CD14-positive monocyte (primary cell): ENCODE measurements at regions of chr12 and their contacts with region 1.

Region 1: GRCh38 chr12:104641862-104642261 is 185.1 kb downstream of the CHST11 start:
- DNase-seq: peak; percentile 91 to 94 (median 93)
- H3K4me3 ChIP-seq: no peak overlapping the region
- H3K4me3 Mint-ChIP-seq: no peak overlapping the region
- H3K27ac ChIP-seq: peak overlapping the region; percentile 93 to 98
- H3K27ac Mint-ChIP-seq: peak overlapping the region; percentile 97 to 100 (median 99)
- H3K4me1 ChIP-seq: peaks cover 88 to 99% of the 10 kb centered on the region in 2 donors
- H3K4me1 Mint-ChIP-seq: peaks cover 86% of the 10 kb centered on the region
- H3K27me3 ChIP-seq: no peaks in the 10 kb centered on the region
- H3K27me3 Mint-ChIP-seq: no peaks in the 10 kb centered on the region
- CTCF ChIP-seq: peak; percentile 51

Region 2: GRCh38 chr12:104604070-104604994 is 37.5 kb before region 1 on chr12:
- intact Hi-C with region 1: loop called (anchors 2 to 5 kb)
- DNase-seq: peak; percentile 94 to 97 (median 95)
- H3K4me3 ChIP-seq: peak overlapping the region in 1 of 3 experiments; percentile 39
- H3K4me3 Mint-ChIP-seq: peak overlapping the region; percentile 65 to 71
- H3K27ac ChIP-seq: peak overlapping the region; percentile 71 to 92
- H3K27ac Mint-ChIP-seq: peak overlapping the region; percentile 95 to 99 (median 98)
- H3K4me1 ChIP-seq: peaks cover 61 to 74% of the 10 kb centered on the region in 2 donors
- H3K4me1 Mint-ChIP-seq: peaks cover 86% of the 10 kb centered on the region
- H3K27me3 ChIP-seq: no peaks in the 10 kb centered on the region
- H3K27me3 Mint-ChIP-seq: peaks cover 0 to 4% (median 0%) of the 10 kb centered on the region in 3 donors
- CTCF ChIP-seq: no peak

Region 3: DNA sequence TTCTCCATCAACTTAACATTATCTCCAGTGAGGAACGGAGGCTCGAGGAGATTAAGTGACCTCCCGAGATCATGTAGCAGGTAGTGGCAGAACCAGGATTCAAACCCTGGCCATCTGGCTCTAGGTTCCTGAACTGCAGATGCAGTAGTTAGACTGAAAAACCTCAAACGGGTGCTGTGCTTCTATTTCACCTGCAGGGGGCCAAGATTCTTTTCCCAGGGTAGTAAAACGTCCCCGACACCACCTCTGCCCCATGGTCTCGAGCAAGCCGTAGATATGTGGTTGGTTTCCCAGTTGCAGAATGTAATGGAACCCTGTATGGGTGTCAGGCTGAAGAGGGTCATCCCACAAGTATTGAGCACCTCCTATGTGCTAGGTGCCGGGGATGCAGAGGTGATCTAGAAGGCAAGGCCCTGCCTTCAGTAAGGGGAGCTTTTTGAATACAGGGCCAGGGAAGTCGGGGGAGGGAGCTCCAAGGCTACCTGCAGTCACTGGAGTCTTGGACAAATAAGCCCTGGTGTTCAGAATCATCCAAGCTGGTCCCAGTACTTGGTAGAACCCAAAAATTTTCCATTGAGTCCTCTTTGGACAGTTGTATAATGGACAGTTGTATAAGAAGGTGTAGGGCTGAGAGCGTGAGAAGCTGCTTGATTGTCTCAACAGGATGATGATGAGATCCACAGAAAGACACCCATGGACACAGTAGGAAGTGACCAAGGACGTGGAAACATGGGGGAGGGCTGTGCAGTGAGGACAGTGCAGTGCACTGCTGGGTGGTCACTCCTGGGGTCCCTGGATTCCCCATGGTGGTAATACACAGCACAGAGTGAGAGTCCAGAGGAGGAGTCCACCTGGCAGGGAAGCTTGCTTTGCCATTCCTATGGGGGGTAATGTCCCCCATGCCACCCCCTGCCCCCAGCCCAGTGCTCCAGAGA is 12.1 kb after region 1 on chr12:
- intact Hi-C with region 1: loop called in 1 of 2 experiments (anchors 1 kb)
- DNase-seq: peak in 1 of 3 donors; percentile 19
- H3K4me3 ChIP-seq: no peak overlapping the region
- H3K4me3 Mint-ChIP-seq: no peak overlapping the region
- H3K27ac ChIP-seq: peak overlapping the region in 1 of 2 donors; percentile 97
- H3K27ac Mint-ChIP-seq: peak overlapping the region; percentile 69 to 99 (median 88)
- H3K4me1 ChIP-seq: peaks cover 65 to 72% of the 10 kb centered on the region in 2 donors
- H3K4me1 Mint-ChIP-seq: peaks cover 85% of the 10 kb centered on the region
- H3K27me3 ChIP-seq: no peaks in the 10 kb centered on the region
- H3K27me3 Mint-ChIP-seq: no peaks in the 10 kb centered on the region
- CTCF ChIP-seq: peak; percentile 44

Region 4: DNA sequence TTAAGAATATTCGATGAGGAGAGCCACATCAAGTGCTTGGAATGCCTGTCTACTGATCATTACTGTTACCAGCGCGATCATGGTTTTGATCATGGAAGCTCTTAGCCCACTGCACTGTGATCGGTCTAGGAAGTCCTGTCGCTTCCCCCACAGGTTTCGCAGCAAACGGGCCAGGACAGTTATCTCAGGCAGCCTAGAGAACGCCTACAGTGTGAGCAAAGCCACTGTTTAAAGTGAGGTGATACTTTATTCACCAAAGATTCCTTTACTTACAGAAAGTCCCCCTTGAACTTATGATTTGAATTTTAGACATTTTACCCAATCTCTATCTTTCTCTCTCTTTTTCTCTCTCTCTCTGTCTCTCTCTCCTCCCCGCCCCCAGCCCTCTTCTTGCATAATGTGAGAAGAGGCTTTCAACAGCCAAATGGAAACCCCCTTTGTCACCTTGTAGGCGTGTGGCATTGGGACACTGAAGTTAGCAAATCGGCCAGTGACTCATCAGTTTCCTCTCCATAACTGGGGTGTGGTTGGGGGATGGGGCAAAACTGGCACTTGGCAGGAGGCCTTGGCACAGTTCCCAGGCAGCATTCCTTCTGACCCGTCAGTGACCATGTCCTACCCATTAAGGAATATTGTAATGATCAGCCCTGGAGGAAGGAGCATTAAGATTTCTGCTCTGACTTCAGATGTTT is 29.7 kb after region 1 on chr12:
- intact Hi-C with region 1: loop called in 1 of 2 experiments (anchors 2 kb)
- DNase-seq: peak; percentile 96 to 99 (median 99)
- H3K4me3 ChIP-seq: peak overlapping the region in 1 of 3 experiments; percentile 36
- H3K4me3 Mint-ChIP-seq: peak overlapping the region; percentile 65 to 84
- H3K27ac ChIP-seq: peak overlapping the region; percentile 97
- H3K27ac Mint-ChIP-seq: peak overlapping the region; percentile 98 to 100 (median 99)
- H3K4me1 ChIP-seq: peaks cover 86 to 94% of the 10 kb centered on the region in 2 donors
- H3K4me1 Mint-ChIP-seq: peaks cover 84% of the 10 kb centered on the region
- H3K27me3 ChIP-seq: no peaks in the 10 kb centered on the region
- H3K27me3 Mint-ChIP-seq: peaks cover 0 to 1% (median 0%) of the 10 kb centered on the region in 3 donors
- CTCF ChIP-seq: no peak

Region 5: DNA sequence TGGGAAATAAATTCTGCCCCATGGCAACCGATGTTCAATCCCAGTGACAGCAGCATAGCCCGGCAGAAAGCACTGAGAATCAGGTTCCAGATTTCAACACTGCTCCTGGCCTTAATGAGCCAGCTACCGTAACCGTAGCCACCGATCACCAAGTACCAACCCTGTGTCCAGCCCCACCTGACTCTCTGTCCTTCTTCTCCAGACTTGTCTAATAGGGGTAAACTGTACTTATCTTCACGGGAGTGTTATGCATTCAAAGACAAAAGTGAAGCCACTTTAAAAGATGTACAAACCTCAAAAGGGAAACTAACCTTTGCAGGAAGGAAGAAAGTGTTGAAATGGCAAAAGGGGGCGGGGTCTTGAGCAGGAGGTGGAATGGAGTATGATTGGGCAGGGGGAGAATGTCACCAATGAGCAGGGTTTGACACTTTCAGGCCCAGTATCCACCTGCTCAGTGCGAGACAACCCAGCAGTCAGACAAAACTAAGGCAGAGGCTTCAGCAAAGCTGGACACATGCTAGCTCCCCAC is 41.0 kb after region 1 on chr12:
- intact Hi-C with region 1: no loop called
- DNase-seq: peak; percentile 69 to 79 (median 78)
- H3K4me3 ChIP-seq: peak overlapping the region; percentile 19 to 70 (median 67)
- H3K4me3 Mint-ChIP-seq: peak overlapping the region; percentile 60 to 90
- H3K27ac ChIP-seq: peak overlapping the region; percentile 78 to 94
- H3K27ac Mint-ChIP-seq: peak overlapping the region; percentile 91 to 98 (median 96)
- H3K4me1 ChIP-seq: peaks cover 89 to 99% of the 10 kb centered on the region in 2 donors
- H3K4me1 Mint-ChIP-seq: peaks cover 91% of the 10 kb centered on the region
- H3K27me3 ChIP-seq: no peaks in the 10 kb centered on the region
- H3K27me3 Mint-ChIP-seq: peaks cover 0 to 6% (median 0%) of the 10 kb centered on the region in 3 donors
- CTCF ChIP-seq: no peak

Region 6: GRCh38 chr12:104825408-104825807 is 183.5 kb after region 1 on chr12:
- intact Hi-C with region 1: no loop called
- DNase-seq: no peak
- H3K4me3 ChIP-seq: no peak overlapping the region
- H3K4me3 Mint-ChIP-seq: no peak overlapping the region
- H3K27ac ChIP-seq: no peak overlapping the region
- H3K27ac Mint-ChIP-seq: peak overlapping the region in 1 of 7 donors; percentile 74
- H3K4me1 ChIP-seq: peaks cover 6 to 19% of the 10 kb centered on the region in 2 donors
- H3K4me1 Mint-ChIP-seq: peaks cover 14% of the 10 kb centered on the region
- H3K27me3 ChIP-seq: no peaks in the 10 kb centered on the region
- H3K27me3 Mint-ChIP-seq: no peaks in the 10 kb centered on the region
- CTCF ChIP-seq: no peak

Region 7: DNA sequence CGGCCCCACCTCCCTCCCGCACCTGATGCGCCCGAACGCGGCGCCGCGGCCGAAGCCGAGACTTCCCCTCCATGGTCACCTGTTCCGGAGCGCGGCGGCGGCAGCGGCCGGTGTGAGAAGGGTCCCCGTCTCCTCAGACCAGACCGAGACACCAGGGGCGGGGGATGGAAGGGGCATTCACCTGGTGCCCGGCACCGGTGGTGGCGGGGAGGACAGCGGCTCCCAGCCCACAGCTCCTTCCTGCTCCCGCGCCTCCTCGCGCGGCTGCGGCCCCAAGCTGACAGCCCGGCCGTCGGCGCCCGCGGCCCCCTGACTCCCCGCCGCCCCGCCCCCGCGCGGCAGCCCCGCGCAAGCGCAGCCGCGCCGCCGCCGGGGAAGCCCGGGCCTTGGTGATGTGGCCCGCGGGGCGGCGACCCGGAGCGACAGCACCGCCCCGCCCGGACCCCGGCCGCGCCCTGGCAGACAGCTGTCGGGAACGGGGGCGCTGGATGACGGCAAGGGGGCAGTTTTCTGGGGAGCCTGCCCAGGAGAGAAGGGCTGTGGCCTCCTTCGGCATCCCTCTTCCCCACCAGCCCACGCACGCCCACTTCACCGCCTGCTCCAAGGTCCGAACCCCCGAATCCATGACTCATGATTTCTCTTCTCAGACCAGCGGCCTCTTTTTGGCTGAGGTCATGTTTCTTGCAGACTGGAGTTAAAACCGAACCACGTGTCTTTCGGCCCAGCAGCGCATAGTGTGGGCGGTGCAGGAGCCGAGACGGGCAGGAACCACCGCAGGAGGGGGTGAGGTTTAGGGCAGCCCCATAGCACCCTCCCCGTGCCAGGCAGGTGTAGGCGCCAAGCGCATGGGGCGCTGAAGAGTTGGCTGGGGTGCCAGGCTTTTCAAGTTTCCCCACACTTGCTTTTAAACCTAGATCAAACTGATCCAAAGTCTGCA is 316.4 kb after region 1 on chr12 and contains the start of gene SLC41A2:
- intact Hi-C with region 1: loop called in 1 of 2 experiments (anchors 10 kb)
- DNase-seq: peak; percentile 75 to 90 (median 79)
- H3K4me3 ChIP-seq: peak within 1 kb of the TSS; percentile 77 to 84 (median 79)
- H3K4me3 Mint-ChIP-seq: peak within 1 kb of the TSS; percentile 90 to 94
- H3K27ac ChIP-seq: peak within 1 kb of the TSS; percentile 14 to 23
- H3K27ac Mint-ChIP-seq: peak within 1 kb of the TSS in 6 of 7 donors; percentile 78 to 91 (median 84)
- H3K4me1 ChIP-seq: peaks cover 10 to 26% of the 10 kb centered on the region in 2 donors
- H3K4me1 Mint-ChIP-seq: peaks cover 24% of the 10 kb centered on the region
- H3K27me3 ChIP-seq: peaks cover 22 to 50% of the 10 kb centered on the region in 2 donors
- H3K27me3 Mint-ChIP-seq: peaks cover 30 to 55% (median 45%) of the 10 kb centered on the region in 3 donors
- CTCF ChIP-seq: no peak
- polyA plus RNA-seq, gene SLC41A2: 0.08 to 0.27 TPM in 2 of 3 donors, not detected in the other